PC-9 (cell line): ENCODE measurements at regions of chr14 and their contacts with region 1.

Region 1: GRCh38 chr14:74762917-74763802 is at the start of gene YLPM1:
- DNase-seq: peak; percentile 98 to 99
- H3K4me3 ChIP-seq: peak within 1 kb of the TSS; percentile 80
- H3K27ac ChIP-seq: peak within 1 kb of the TSS; percentile 55
- H3K4me1 ChIP-seq: peaks cover 45% of the 10 kb centered on the region
- H3K27me3 ChIP-seq: no peaks in the 10 kb centered on the region
- CTCF ChIP-seq: peak; percentile 40; the same call in 1 of the 2 replicates
- total RNA-seq, gene YLPM1: 146 and 170 TPM in 2 replicates

Region 2: GRCh38 chr14:74309125-74310022 is 453.8 kb before region 1 on chr14:
- CTCF ChIA-PET with region 1: no interaction called
- POLR2A ChIA-PET with region 1: interaction called, 16 read pairs
- intact Hi-C with region 1: no loop called
- DNase-seq: no peak
- H3K4me3 ChIP-seq: no peak overlapping the region
- H3K27ac ChIP-seq: no peak overlapping the region
- H3K4me1 ChIP-seq: 0 out of 2 replicates have a peak, but pooled peaks cover 5% of the 10 kb centered on the region
- H3K27me3 ChIP-seq: no peaks in the 10 kb centered on the region
- CTCF ChIP-seq: no peak

Region 3: GRCh38 chr14:74712499-74713394 is 50.4 kb before region 1 on chr14 and contains the starts of genes AREL1 and FCF1:
- CTCF ChIA-PET with region 1: no interaction called
- POLR2A ChIA-PET with region 1: no interaction called
- intact Hi-C with region 1: loop called (anchors 1 kb)
- DNase-seq: peak; percentile 86 to 92
- H3K4me3 ChIP-seq: peak within 1 kb of the TSS; percentile 67
- H3K27ac ChIP-seq: peak within 1 kb of the TSS; percentile 27; the same call in 1 of the 2 replicates
- H3K4me1 ChIP-seq: peaks cover 21% of the 10 kb centered on the region
- H3K27me3 ChIP-seq: no peaks in the 10 kb centered on the region
- CTCF ChIP-seq: no peak
- total RNA-seq, gene AREL1: 98.4 and 108 TPM in 2 replicates
- total RNA-seq, gene FCF1: 175 and 191 TPM in 2 replicates

Region 4: DNA sequence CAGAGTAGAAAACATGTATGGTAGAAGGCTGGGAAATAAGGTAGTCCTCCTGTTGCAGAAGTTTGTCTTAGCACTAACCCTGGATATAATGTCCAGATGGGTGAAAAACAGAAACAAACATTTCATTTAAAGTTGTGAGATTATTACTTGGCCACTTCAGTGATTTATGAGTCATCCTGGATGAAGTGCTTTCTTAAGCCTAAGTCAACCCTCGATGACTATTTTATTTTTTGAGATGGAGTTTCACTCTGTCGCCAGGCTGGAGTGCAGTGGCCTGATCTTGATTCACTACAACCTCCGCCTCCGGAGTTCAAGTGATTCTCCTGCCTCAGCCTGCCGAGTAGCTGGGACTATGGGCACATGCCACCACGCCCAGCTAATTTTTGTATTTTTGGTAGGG is 128.7 kb after region 1 on chr14:
- CTCF ChIA-PET with region 1: no interaction called
- POLR2A ChIA-PET with region 1: no interaction called
- intact Hi-C with region 1: no loop called
- DNase-seq: no peak
- H3K4me3 ChIP-seq: no peak overlapping the region
- H3K27ac ChIP-seq: no peak overlapping the region
- H3K4me1 ChIP-seq: peaks cover 28% of the 10 kb centered on the region
- H3K27me3 ChIP-seq: no peaks in the 10 kb centered on the region
- CTCF ChIP-seq: no peak

Region 5: GRCh38 chr14:75249251-75249957 is 486.2 kb after region 1 on chr14:
- CTCF ChIA-PET with region 1: no interaction called
- POLR2A ChIA-PET with region 1: interaction called, 24 read pairs
- intact Hi-C with region 1: no loop called
- DNase-seq: peak; percentile 48 to 72
- H3K4me3 ChIP-seq: no peak overlapping the region; the same call in 1 of the 2 replicates
- H3K27ac ChIP-seq: peak overlapping the region; percentile 51
- H3K4me1 ChIP-seq: peaks cover 60% of the 10 kb centered on the region
- H3K27me3 ChIP-seq: no peaks in the 10 kb centered on the region
- CTCF ChIP-seq: no peak

Region 6: GRCh38 chr14:75570797-75571196 is 807.6 kb after region 1 on chr14:
- CTCF ChIA-PET with region 1: no interaction called
- POLR2A ChIA-PET with region 1: no interaction called
- intact Hi-C with region 1: no loop called
- DNase-seq: no peak
- H3K4me3 ChIP-seq: no peak overlapping the region
- H3K27ac ChIP-seq: no peak overlapping the region
- H3K4me1 ChIP-seq: peaks cover 43% of the 10 kb centered on the region
- H3K27me3 ChIP-seq: no peaks in the 10 kb centered on the region
- CTCF ChIP-seq: no peak